Activated T-helper 1 cell treated with anti-CD3 and anti-CD28 coated beads, Interleukin-12 subunit alpha, Interleukin-12 subunit beta, Interleukin-2, Interleukin-4 antibody, amounts not matched to agents 30 ng/mL and 10 ng/mL and 1 ng/mL, durations not matched to agents 14 hours and 24 hours and 36 hours (primary cell): ENCODE measurements at regions of chr14 and their contacts with region 1.

Region 1: GRCh38 chr14:68663385-68664076 is 129.3 kb downstream of the ZFP36L1 start:
- DNase-seq: peak; percentile 26
- H3K4me3 Mint-ChIP-seq: peak overlapping the region; percentile 45
- H3K27ac Mint-ChIP-seq: peak overlapping the region; percentile 72
- H3K4me1 Mint-ChIP-seq: peaks cover 55% of the 10 kb centered on the region
- H3K27me3 Mint-ChIP-seq: peaks cover 4% of the 10 kb centered on the region

Region 2: GRCh38 chr14:68210729-68211299 is 452.7 kb before region 1 on chr14:
- intact Hi-C with region 1: loop called (anchors 1 kb)
- DNase-seq: peak; percentile 55
- H3K4me3 Mint-ChIP-seq: peak overlapping the region; percentile 66
- H3K27ac Mint-ChIP-seq: peak overlapping the region; percentile 73
- H3K4me1 Mint-ChIP-seq: peaks cover 49% of the 10 kb centered on the region
- H3K27me3 Mint-ChIP-seq: no peaks in the 10 kb centered on the region

Region 3: DNA sequence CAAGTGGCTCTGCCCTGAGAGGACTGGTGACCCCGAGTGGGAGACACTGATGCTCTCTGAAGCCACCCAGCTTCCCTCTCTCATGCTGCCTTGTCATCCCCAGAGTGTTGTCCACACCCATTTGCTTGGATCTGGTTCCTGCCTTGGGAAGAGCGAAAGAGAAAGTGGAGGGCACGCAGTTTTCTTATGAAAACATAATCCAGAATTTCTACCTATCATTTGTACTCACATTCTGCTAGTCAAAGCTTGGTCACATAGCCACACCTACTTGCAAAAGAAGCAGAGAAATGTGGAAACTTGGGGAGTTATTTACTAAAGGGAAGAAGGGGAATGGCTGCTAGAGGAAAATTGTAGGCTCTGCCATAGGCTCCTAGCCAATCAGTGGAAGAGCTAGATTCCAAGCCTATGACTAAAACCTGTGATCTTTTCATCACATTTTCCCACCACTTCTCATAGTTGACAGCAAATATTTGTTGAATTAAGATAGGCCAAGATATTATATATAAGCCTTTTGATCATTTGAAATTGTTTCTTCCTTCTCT is 197.0 kb before region 1 on chr14:
- intact Hi-C with region 1: loop called (anchors 1 kb)
- DNase-seq: no peak
- H3K4me3 Mint-ChIP-seq: no peak overlapping the region
- H3K27ac Mint-ChIP-seq: no peak overlapping the region
- H3K4me1 Mint-ChIP-seq: peaks cover 33% of the 10 kb centered on the region
- H3K27me3 Mint-ChIP-seq: no peaks in the 10 kb centered on the region

Region 4: DNA sequence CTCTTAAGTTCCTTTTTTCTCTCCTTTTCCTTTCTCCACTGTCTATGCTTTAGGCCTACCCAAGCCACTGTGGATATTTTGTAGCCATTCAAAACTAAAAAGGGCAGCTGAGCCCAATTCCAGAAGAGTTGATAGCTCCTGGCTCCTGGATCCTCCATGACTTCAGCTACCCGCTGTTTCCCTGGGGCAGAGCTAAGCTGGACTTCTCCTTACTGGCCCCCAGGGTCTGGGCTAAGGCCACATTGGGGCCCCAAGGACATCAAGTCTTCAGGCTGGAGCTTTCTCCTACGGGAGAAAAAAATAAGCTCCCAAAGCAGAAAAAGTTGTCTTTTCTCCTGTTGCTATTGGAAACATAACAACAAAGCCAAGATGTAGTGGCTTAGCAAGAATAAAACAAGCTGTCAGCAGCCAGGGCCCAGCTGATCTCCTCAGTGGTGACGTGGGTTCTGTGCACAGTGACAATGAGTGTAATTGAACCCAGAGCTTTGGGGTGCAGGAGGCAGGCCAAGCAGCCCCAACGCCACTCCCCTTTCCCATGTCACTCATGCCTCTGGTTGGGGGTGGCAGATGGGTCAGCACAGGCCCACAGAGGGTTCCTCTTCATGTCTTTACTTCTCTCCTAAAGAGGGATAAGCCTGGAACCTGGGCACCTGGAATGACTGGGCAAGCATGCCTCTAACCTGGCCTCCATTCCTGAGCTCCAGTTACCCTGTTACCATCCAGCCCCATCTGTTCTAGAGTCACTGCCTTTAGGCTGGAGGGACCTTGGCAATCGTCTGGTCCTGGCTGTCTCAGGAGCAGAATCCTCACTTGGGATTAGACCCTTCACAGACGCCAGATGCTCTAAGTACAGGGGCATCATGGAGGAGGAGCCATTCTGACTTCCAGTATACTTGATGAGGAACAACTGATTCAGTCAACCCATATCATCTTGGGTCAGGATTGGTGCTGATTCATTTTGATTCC is 41.8 kb before region 1 on chr14:
- intact Hi-C with region 1: no loop called
- DNase-seq: no peak
- H3K4me3 Mint-ChIP-seq: no peak overlapping the region
- H3K27ac Mint-ChIP-seq: no peak overlapping the region
- H3K4me1 Mint-ChIP-seq: no peaks in the 10 kb centered on the region
- H3K27me3 Mint-ChIP-seq: no peaks in the 10 kb centered on the region

Region 5: DNA sequence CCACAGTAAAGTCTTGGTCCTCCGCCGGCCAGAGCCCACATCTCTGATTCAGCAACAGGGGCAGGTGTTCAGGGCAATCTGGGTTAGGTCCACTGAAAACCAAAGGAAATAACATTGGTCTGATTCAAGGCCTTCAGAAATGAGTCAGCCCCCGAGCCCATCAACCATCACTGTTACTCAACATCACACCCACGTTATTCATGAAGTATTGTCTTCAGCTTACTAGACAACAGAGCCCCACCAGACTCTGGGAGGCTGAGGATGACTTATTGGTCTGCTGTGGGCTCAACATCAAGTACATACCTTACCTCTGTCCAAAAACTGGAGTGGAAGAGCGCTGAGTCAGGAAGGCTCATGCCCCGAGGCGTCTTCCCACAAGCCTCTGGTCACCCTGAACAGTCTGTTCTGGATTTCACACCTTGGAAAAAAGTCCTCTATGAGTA is 31.8 kb after region 1 on chr14:
- intact Hi-C with region 1: loop called (anchors 1 kb)
- DNase-seq: no peak
- H3K4me3 Mint-ChIP-seq: peak overlapping the region; percentile 16
- H3K27ac Mint-ChIP-seq: peak overlapping the region; percentile 52
- H3K4me1 Mint-ChIP-seq: peaks cover 26% of the 10 kb centered on the region
- H3K27me3 Mint-ChIP-seq: peaks cover 9% of the 10 kb centered on the region

Region 6: DNA sequence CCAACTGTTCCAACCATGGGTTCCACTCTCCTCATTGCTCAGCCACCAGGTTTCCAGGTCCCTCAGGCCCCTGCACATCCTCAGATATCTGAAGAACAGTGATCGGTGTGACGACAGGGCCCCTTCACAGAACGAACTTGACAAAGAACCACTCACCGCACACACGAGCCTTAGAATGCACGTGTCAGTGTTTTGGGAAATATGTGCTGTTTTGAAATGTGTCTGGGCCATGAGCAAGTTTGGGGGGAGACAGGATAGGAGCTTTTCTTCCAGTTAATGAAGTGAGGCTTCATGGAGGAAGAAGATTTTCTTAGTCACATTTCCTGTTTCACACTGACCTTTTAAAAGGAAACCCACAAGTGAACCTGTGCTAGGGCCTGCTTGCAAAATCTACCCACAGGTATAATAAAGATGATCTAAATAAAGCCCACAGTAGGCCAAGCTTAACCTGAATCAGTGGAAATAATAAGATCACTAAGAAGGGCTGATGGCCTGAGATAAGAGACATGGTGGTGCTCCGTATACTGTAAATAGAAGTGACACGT is 70.8 kb after region 1 on chr14:
- intact Hi-C with region 1: loop called (anchors 1 kb)
- DNase-seq: no peak
- H3K4me3 Mint-ChIP-seq: peak overlapping the region; percentile 16
- H3K27ac Mint-ChIP-seq: peak overlapping the region; percentile 77
- H3K4me1 Mint-ChIP-seq: peaks cover 67% of the 10 kb centered on the region
- H3K27me3 Mint-ChIP-seq: no peaks in the 10 kb centered on the region

Region 7: DNA sequence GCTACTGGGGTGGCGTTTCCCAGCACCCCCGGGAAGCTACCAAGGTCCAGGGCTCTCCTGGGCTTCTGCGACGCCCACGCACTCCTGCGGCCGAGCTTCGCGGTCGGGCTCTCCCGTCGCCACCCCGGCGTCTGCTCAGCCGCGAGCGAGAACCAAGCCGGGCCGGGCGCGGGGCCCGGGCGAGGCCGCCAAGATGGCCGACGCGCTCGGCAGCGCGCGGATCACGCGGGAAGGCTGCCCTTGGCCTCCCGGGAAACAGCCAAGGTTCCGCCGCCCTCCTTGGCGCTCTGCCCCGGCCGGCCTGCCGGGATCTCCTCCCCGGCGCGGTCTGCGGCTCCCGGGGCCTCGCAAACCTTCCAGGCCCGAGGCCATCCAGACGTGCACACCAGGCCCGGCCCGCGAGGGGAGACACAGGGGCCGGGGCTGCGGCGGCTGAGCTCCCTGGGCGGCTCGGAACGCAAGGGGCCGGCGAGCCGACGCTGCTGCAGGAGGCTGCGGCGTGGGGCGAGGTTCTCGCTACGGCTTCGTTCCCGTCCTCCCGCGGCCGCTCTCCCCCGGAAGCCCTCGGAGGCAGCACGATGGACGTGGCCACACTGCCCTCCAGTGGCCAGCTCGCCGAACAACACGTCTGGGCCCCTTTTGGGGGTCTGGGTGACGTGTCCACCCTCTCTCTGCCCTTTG is 152.9 kb after region 1 on chr14:
- intact Hi-C with region 1: loop called (anchors 1 kb)
- DNase-seq: peak; percentile 84
- H3K4me3 Mint-ChIP-seq: peak overlapping the region; percentile 76
- H3K27ac Mint-ChIP-seq: peak overlapping the region; percentile 90
- H3K4me1 Mint-ChIP-seq: peaks cover 58% of the 10 kb centered on the region
- H3K27me3 Mint-ChIP-seq: no peaks in the 10 kb centered on the region